ENCODE measurements at regions of chr19 and their contacts with region 1.

Region 1: GRCh38 chr19:57240311-57241090 is at the start of gene ZNF805:
- DNase-seq: peak; percentile 89 to 97 (median 96)
- H3K4me3 ChIP-seq: peak within 1 kb of the TSS; percentile 69 to 100 (median 95)
- H3K27ac ChIP-seq: peak within 1 kb of the TSS in 57 of 59 donors; percentile 18 to 96 (median 86)
- H3K27me3 ChIP-seq: no peaks in the 10 kb centered on the region
- CTCF ChIP-seq: peak in 45 of 56 donors; percentile 9 to 56 (median 35)
- total RNA-seq, gene ZNF805: 13.8 to 22.6 (median 17.4) TPM

Region 2: GRCh38 chr19:57191141-57192076 is 49.1 kb before region 1 on chr19 and contains the start of gene ZNF264:
- intact Hi-C with region 1: loop called (anchors 2 to 5 kb)
- DNase-seq: peak; percentile 85 to 94 (median 92)
- H3K4me3 ChIP-seq: peak within 1 kb of the TSS; percentile 61 to 100 (median 97)
- H3K27ac ChIP-seq: peak within 1 kb of the TSS in 58 of 59 donors; percentile 69 to 96 (median 88)
- H3K27me3 ChIP-seq: peaks cover 0 to 10% (median 0%) of the 10 kb centered on the region in 45 donors
- CTCF ChIP-seq: peak in 33 of 56 donors; percentile 3 to 45 (median 24)
- total RNA-seq, gene ZNF264: 28.2 to 58.6 (median 43.9) TPM

Measured in dorsolateral prefrontal cortex (tissue), 120 donors.